ENCODE measurements at regions of chr7 and their contacts with region 1.

Region 1: GRCh38 chr7:51315393-51316261 is 982 bp downstream of the COBL start:
- DNase-seq: peak; percentile 74
- ATAC-seq: peak; percentile 52
- H3K4me3 ChIP-seq: peak overlapping the region; percentile 80
- H3K27ac ChIP-seq: peak overlapping the region; percentile 60
- H3K4me1 ChIP-seq: peaks cover 25% of the 10 kb centered on the region
- H3K27me3 ChIP-seq: no peaks in the 10 kb centered on the region
- CTCF ChIP-seq: no peak

Region 2: DNA sequence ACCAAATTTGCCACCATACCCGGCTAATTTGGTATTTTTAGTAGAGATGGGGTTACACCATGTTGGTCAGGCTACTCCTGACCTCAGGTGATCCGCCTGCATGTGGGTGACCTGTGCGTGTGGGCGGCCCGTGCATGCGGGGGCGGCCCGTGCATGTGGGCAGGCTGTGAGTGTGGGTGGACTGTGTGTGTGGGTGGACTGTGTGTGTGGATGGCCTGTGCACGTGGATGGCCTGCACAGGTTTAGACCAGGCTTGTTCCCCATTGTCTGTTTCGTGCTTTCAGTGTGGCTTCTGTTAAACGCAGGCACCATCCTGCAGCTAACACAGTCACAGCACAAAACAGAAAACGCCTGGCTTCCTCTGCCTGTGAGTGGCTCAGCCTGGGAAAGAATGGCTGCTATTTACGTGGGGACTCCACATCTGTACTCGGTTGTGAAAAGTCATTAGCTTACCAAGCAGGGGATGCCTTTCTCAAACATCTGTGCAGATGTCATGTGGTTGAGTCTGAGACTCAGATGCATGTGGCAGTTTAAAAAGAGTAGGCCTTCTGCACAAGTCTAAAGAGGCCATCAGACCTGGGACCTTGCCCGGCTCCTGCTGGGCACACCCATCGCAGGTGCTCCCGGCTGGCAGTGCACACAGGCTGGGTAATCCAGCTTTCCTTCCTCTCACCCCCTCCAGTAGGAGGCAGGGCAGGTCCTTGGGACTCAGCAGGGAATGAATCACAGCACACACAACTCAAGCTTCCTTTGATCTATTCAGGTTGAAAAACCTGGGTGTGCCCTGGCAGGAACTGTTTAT is 90.6 kb before region 1 on chr7:
- CTCF ChIA-PET with region 1: no interaction called
- POLR2A ChIA-PET with region 1: no interaction called
- intact Hi-C with region 1: loop called (anchors 1 kb)
- DNase-seq: peak; percentile 86
- ATAC-seq: peak; percentile 78
- H3K4me3 ChIP-seq: no peak overlapping the region
- H3K27ac ChIP-seq: peak overlapping the region; percentile 79
- H3K4me1 ChIP-seq: peaks cover 25% of the 10 kb centered on the region
- H3K27me3 ChIP-seq: no peaks in the 10 kb centered on the region
- CTCF ChIP-seq: peak; percentile 80

Region 3: DNA sequence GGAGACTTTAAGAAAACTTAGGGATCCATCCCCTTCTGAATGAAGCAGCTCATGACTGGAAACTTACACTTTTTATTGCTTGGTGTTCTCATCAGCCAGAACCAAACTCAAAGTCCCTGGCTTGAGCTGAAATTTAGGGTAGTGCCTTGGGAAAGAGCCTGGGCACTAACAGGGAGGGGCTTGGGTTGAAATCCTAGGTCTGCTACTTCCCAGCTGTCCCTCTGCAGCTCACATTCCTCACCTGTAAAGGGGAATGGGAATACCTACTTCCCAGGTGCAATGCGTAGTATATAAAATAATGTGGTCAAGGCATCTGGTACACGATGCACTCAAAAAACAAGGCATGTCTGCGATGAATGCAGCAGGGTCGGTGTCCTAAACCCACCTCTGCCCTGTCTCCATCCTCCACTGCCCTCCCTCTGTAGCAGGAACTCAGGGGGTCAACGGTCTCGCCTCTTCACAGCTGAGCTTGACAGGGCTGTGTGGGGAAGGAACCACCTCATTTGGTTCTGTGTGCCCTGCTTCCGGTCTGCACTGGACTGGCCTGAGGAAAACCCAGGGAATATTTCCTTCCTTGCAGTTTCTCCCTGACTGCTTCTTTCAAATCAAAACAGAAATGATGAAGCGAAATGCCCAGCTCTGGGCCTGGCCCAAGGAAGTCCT is 79.0 kb before region 1 on chr7:
- CTCF ChIA-PET with region 1: no interaction called
- POLR2A ChIA-PET with region 1: no interaction called
- intact Hi-C with region 1: no loop called
- DNase-seq: no peak
- ATAC-seq: no peak
- H3K4me3 ChIP-seq: no peak overlapping the region
- H3K27ac ChIP-seq: no peak overlapping the region
- H3K4me1 ChIP-seq: no peaks in the 10 kb centered on the region
- H3K27me3 ChIP-seq: no peaks in the 10 kb centered on the region
- CTCF ChIP-seq: no peak

Region 4: DNA sequence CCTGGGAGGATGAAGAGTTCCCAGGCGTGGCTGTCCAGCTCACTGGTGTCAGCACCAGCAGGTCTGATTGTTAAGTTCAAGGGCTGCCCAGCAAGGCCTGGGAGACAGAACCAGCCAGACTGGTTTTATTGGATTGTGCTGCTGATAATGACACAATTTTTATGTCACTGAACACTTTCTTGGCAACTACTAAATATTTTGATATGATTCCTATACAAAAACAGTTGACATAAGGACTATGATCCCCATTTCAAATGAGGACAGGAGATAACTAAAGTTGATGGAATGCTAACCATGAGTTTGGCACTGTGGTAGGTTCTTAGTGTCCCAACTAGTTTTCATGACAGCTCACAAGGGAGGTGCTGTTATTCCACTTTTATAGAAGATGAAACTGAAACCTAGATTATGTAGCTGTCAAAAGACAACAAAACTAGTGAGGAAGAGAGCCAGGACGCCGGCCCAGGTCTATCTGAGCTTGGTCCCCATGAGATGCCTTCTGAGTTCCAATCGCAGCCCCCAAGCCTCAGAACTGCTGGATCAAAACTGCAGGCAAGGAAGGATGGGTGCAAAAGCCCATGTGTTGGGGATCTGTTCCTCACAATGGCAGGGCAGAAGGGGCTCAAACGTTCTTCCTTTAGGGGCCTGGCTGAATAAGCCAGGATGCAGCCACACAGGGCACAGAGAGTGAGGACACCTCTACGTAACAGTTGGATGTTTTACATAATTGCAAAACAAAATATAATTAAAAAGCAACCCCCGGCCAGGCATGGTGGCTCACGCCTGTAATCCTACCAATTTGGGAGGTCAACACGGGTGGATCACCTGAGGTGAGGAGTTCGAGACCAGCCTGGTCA is 51.8 kb before region 1 on chr7:
- CTCF ChIA-PET with region 1: no interaction called
- POLR2A ChIA-PET with region 1: interaction called, 4 read pairs
- intact Hi-C with region 1: loop called (anchors 5 kb)
- DNase-seq: peak; percentile 94
- ATAC-seq: peak; percentile 83
- H3K4me3 ChIP-seq: peak overlapping the region; percentile 48
- H3K27ac ChIP-seq: peak overlapping the region; percentile 83
- H3K4me1 ChIP-seq: peaks cover 34% of the 10 kb centered on the region
- H3K27me3 ChIP-seq: no peaks in the 10 kb centered on the region
- CTCF ChIP-seq: no peak

Region 5: GRCh38 chr7:51299391-51300133 is 16.1 kb before region 1 on chr7:
- CTCF ChIA-PET with region 1: interaction called, 3 read pairs
- POLR2A ChIA-PET with region 1: no interaction called
- intact Hi-C with region 1: loop called (anchors 2 kb)
- DNase-seq: no peak
- ATAC-seq: no peak
- H3K4me3 ChIP-seq: no peak overlapping the region
- H3K27ac ChIP-seq: no peak overlapping the region
- H3K4me1 ChIP-seq: peaks cover 37% of the 10 kb centered on the region
- H3K27me3 ChIP-seq: no peaks in the 10 kb centered on the region
- CTCF ChIP-seq: 0 out of 2 replicates have a peak, but pooled peaks have one; percentile 17

Region 6: DNA sequence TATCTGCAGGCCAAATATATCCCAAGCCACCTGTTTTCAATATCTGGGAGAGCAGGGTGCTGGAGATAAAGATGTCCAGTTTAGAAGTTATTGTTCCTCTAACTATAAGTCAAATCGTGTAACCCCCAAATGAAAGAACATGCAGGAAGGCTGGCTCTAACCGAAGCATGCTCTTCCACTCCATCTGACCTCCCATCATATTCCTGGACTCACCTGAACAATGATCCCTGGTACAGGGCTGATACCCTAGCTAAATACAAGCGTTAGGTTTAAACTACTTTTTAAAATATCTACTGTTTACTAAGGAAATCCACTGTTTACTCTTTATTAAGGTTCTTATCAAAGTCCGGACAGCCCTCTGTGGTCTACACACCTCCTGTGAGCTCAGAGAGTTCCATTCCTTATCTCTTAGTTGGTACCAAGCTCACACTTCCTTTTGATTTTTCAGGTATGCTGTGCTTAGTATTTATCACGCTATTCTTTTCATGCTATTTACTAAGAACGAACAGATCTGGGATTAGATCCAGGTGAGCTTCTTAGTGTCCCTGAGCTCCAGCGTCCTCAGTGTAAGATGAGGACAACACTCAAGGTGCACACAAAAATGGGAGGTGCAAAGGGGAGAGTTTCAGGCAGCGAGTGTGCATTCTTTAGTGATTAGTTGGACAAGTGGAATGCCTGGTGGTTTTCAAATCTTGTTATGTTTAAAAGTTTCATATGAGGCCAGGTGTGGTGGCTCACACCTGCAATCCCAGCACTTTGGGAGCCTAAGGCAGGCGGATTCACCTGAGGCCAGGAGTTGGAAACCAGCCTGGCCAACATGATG is 24.6 kb after region 1 on chr7:
- CTCF ChIA-PET with region 1: no interaction called
- POLR2A ChIA-PET with region 1: no interaction called
- intact Hi-C with region 1: loop called (anchors 1 kb)
- DNase-seq: peak; percentile 90
- ATAC-seq: peak; percentile 93
- H3K4me3 ChIP-seq: no peak overlapping the region
- H3K27ac ChIP-seq: no peak overlapping the region
- H3K4me1 ChIP-seq: peaks cover 19% of the 10 kb centered on the region
- H3K27me3 ChIP-seq: no peaks in the 10 kb centered on the region
- CTCF ChIP-seq: no peak

Region 7: GRCh38 chr7:51350200-51350921 is 34.7 kb after region 1 on chr7:
- CTCF ChIA-PET with region 1: no interaction called
- POLR2A ChIA-PET with region 1: no interaction called
- intact Hi-C with region 1: loop called (anchors 2 kb)
- DNase-seq: peak; percentile 92
- ATAC-seq: peak; percentile 100
- H3K4me3 ChIP-seq: peak overlapping the region; percentile 42
- H3K27ac ChIP-seq: peak overlapping the region; percentile 57
- H3K4me1 ChIP-seq: peaks cover 12% of the 10 kb centered on the region
- H3K27me3 ChIP-seq: no peaks in the 10 kb centered on the region
- CTCF ChIP-seq: no peak

Region 8: DNA sequence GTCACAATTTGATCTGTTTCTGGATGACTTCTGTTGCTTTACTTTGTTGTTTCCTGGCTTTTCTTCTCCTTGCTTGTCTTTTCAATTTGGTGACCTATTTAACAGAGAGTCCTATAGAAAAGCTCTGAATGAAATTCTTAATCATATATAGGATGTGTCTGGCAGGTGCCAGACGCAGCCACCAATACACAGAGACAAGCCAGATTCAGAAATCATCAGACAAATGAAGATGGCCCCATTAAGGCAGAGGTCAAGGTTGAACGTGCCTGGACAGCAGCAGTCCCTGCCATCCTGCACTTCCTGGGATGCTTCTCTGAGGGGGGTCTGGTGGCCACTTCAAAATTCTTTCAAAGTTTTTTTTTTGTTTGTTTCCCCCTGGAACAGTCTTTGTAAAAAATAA is 847.7 kb after region 1 on chr7:
- CTCF ChIA-PET with region 1: no interaction called
- POLR2A ChIA-PET with region 1: no interaction called
- intact Hi-C with region 1: no loop called
- DNase-seq: no peak
- ATAC-seq: no peak
- H3K4me3 ChIP-seq: no peak overlapping the region
- H3K27ac ChIP-seq: no peak overlapping the region
- H3K4me1 ChIP-seq: no peaks in the 10 kb centered on the region
- H3K27me3 ChIP-seq: no peaks in the 10 kb centered on the region; the same call in 1 of the 2 replicates
- CTCF ChIP-seq: no peak